Breast epithelium (tissue), 4 donors: ENCODE measurements at regions of chrX and their contacts with region 1.

Region 1: DNA sequence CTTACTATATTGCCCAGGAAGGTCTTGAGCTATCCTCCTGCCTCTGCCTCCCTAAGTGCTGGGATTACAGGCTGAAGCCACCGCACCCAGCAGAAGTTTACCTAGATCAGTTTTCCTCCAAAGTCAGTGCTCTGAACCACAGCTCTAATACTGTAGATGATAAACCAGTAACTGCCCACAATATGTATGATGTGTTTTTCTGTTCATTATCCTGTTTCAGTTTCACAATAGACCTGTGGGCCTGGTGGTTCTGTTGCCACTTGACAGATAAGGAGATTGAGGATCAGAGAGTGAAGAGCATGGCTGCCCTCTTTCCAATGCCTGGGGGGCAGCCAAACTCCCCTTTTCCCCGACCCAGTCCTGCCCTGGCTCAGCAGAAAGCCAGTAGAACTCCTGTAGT is 87.0 kb downstream of the EFNB1 start:
- DNase-seq: no peak
- H3K4me3 ChIP-seq: no peak overlapping the region
- H3K27ac ChIP-seq: no peak overlapping the region
- H3K4me1 ChIP-seq: no peaks in the 10 kb centered on the region
- H3K27me3 ChIP-seq: peaks cover 0 to 62% of the 10 kb centered on the region in 2 donors
- CTCF ChIP-seq: no peak
- POLR2A ChIP-seq: no peak

Region 2: DNA sequence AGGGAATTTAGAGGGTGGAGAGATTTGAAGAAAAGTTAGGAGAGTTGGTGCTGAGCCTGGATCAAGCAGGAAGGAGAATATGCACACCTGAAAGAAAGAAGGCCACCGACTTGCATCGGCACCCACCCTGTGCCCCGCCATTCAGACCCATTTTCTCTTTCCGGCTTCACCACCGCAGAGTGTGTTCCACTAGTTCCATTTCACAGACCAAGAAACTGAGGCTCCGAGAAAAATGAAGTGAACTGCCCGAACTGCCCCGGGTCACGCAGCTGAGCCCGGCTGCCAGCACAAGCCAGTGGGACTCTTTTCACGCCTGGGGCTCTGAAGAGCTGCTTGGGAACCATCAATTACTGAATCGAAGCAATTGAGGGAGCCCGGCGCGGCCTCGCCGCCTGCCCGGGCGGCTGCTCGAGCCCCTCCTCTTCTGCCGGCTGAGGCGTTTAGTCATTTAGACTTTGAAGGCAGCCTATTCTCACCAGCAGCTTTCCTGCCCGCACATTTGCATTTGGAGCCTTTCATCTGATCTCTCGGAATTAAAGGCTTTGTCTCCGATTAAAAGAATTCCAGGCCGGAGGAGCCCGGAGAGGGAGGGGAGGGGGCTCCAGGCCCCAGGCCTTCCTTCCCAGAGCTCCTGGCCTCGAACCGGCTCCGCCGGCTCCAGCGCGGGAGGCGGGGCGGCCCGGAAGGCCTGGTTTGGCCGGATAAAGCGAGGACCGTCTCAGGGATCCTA is 389.7 kb after region 1 on chrX:
- intact Hi-C with region 1: no loop called
- DNase-seq: no peak
- H3K4me3 ChIP-seq: peak overlapping the region in 1 of 3 donors; percentile 22
- H3K27ac ChIP-seq: no peak overlapping the region
- H3K4me1 ChIP-seq: no peaks in the 10 kb centered on the region
- H3K27me3 ChIP-seq: peaks cover 0 to 68% of the 10 kb centered on the region in 2 donors
- CTCF ChIP-seq: no peak
- POLR2A ChIP-seq: no peak

Region 3: GRCh38 chrX:69961365-69962072 is 1045.7 kb after region 1 on chrX:
- intact Hi-C with region 1: loop called (anchors 5 kb)
- DNase-seq: no peak
- H3K4me3 ChIP-seq: no peak overlapping the region
- H3K27ac ChIP-seq: no peak overlapping the region
- H3K4me1 ChIP-seq: no peaks in the 10 kb centered on the region
- H3K27me3 ChIP-seq: peaks cover 0 to 10% of the 10 kb centered on the region in 2 donors
- CTCF ChIP-seq: no peak
- POLR2A ChIP-seq: no peak